ENCODE measurements at regions of chr3 and their contacts with region 1.

Region 1: GRCh38 chr3:187139126-187139894 is at the start of gene RPL39L:
- DNase-seq: peak; percentile 58
- H3K4me3 Mint-ChIP-seq: peak within 1 kb of the TSS; percentile 66
- H3K27ac Mint-ChIP-seq: no peak within 1 kb of the TSS
- H3K4me1 Mint-ChIP-seq: no peaks in the 10 kb centered on the region
- H3K27me3 Mint-ChIP-seq: no peaks in the 10 kb centered on the region
- CTCF ChIP-seq: peak; percentile 47
- total RNA-seq, gene RPL39L: 1.0 and 3.3 TPM in 2 replicates

Region 2: GRCh38 chr3:186487819-186488218 is 651.5 kb before region 1 on chr3:
- CTCF ChIA-PET with region 1: no interaction called
- POLR2A ChIA-PET with region 1: no interaction called
- intact Hi-C with region 1: no loop called
- DNase-seq: peak; percentile 16
- H3K4me3 Mint-ChIP-seq: no peak overlapping the region
- H3K27ac Mint-ChIP-seq: no peak overlapping the region
- H3K4me1 Mint-ChIP-seq: no peaks in the 10 kb centered on the region
- H3K27me3 Mint-ChIP-seq: peaks cover 31% of the 10 kb centered on the region
- CTCF ChIP-seq: no peak

Region 3: GRCh38 chr3:187150599-187150998 is 11.3 kb after region 1 on chr3:
- CTCF ChIA-PET with region 1: interaction called, 23 read pairs
- POLR2A ChIA-PET with region 1: interaction called, 4 read pairs
- intact Hi-C with region 1: no loop called
- DNase-seq: no peak
- H3K4me3 Mint-ChIP-seq: no peak overlapping the region
- H3K27ac Mint-ChIP-seq: no peak overlapping the region
- H3K4me1 Mint-ChIP-seq: no peaks in the 10 kb centered on the region
- H3K27me3 Mint-ChIP-seq: peaks cover 36% of the 10 kb centered on the region
- CTCF ChIP-seq: no peak

Region 4: DNA sequence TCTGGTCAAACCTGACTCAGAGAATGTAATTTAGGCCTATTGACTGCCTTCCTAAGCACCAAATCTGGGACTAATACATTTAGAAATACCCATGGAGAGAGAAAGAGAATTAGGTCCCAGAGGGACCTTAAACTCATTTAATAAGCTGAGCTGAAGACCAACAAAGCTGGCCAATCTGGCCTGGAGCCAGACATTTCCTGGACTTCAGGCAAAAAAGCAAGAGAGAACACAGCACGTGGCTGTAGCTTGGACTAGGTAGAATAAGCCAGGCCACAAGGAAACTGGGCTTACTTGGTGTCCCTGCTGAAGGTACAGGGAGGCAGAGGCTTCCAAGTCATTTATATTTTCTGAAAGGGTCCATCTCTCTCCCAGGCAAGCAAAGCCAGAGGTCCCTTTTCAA is 316.9 kb after region 1 on chr3:
- CTCF ChIA-PET with region 1: no interaction called
- POLR2A ChIA-PET with region 1: no interaction called
- intact Hi-C with region 1: no loop called
- DNase-seq: peak; percentile 33
- H3K4me3 Mint-ChIP-seq: no peak overlapping the region
- H3K27ac Mint-ChIP-seq: no peak overlapping the region
- H3K4me1 Mint-ChIP-seq: no peaks in the 10 kb centered on the region
- H3K27me3 Mint-ChIP-seq: peaks cover 77% of the 10 kb centered on the region
- CTCF ChIP-seq: no peak

Measured in MCF 10A (cell line).